Activated CD4-positive, alpha-beta memory T cell treated with anti-CD3 and anti-CD28 coated beads for 36 hours (primary cell): ENCODE measurements at regions of chr9 and their contacts with region 1.

Region 1: GRCh38 chr9:121278535-121279261 is 10.7 kb downstream of the GSN start:
- DNase-seq: peak; percentile 60
- H3K4me3 Mint-ChIP-seq: no peak overlapping the region
- H3K27ac Mint-ChIP-seq: no peak overlapping the region
- H3K4me1 Mint-ChIP-seq: peaks cover 5% of the 10 kb centered on the region
- H3K27me3 Mint-ChIP-seq: no peaks in the 10 kb centered on the region

Region 2: GRCh38 chr9:121213136-121213806 is 65.4 kb before region 1 on chr9:
- CTCF ChIA-PET with region 1: interaction called, 17 read pairs
- POLR2A ChIA-PET with region 1: no interaction called
- intact Hi-C with region 1: loop called (anchors 5 kb)
- DNase-seq: peak; percentile 84
- H3K4me3 Mint-ChIP-seq: no peak overlapping the region
- H3K27ac Mint-ChIP-seq: no peak overlapping the region
- H3K4me1 Mint-ChIP-seq: peaks cover 5% of the 10 kb centered on the region
- H3K27me3 Mint-ChIP-seq: no peaks in the 10 kb centered on the region

Region 3: DNA sequence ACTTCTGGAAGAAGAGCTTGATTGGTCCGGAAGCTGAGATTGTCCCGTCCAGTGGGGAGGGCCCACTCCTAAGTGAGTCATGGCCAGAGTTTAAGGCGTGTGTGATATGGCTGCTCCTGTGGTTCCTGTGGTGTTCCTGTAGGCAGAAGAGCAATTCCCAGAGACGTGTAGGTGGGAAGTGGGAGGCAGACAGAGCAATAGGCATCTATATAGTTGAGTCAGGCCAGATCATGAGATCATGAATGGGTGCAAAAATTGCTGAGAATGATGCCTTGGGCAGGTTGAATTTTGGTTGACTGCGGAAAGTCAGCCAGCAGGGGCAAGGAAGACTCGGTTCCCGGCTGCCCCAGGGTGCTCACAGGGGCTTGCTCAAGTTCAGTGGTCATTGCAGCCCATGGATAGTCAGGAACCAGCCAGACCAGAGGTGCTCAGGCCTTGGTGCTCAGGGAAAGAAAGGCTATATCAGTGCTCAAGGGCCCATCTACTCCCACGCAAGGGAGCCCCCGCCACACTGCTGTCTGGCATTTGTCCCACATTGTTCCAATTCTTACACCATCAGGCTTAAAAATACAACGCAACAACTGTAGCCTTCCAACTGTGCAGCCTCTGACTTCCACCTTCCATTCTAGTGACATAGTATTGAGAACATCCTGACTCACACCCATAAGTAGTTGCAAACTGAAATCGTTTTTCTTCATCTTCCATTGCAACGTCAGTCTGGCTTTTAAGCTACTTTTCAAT is 31.7 kb before region 1 on chr9:
- CTCF ChIA-PET with region 1: interaction called, 14 read pairs
- POLR2A ChIA-PET with region 1: no interaction called
- intact Hi-C with region 1: no loop called
- DNase-seq: no peak
- H3K4me3 Mint-ChIP-seq: no peak overlapping the region
- H3K27ac Mint-ChIP-seq: no peak overlapping the region
- H3K4me1 Mint-ChIP-seq: no peaks in the 10 kb centered on the region
- H3K27me3 Mint-ChIP-seq: no peaks in the 10 kb centered on the region

Region 4: GRCh38 chr9:121261107-121261460 is 17.6 kb before region 1 on chr9:
- CTCF ChIA-PET with region 1: interaction called, 16 read pairs
- POLR2A ChIA-PET with region 1: no interaction called
- intact Hi-C with region 1: no loop called
- DNase-seq: no peak
- H3K4me3 Mint-ChIP-seq: no peak overlapping the region
- H3K27ac Mint-ChIP-seq: no peak overlapping the region
- H3K4me1 Mint-ChIP-seq: no peaks in the 10 kb centered on the region
- H3K27me3 Mint-ChIP-seq: no peaks in the 10 kb centered on the region

Region 5: DNA sequence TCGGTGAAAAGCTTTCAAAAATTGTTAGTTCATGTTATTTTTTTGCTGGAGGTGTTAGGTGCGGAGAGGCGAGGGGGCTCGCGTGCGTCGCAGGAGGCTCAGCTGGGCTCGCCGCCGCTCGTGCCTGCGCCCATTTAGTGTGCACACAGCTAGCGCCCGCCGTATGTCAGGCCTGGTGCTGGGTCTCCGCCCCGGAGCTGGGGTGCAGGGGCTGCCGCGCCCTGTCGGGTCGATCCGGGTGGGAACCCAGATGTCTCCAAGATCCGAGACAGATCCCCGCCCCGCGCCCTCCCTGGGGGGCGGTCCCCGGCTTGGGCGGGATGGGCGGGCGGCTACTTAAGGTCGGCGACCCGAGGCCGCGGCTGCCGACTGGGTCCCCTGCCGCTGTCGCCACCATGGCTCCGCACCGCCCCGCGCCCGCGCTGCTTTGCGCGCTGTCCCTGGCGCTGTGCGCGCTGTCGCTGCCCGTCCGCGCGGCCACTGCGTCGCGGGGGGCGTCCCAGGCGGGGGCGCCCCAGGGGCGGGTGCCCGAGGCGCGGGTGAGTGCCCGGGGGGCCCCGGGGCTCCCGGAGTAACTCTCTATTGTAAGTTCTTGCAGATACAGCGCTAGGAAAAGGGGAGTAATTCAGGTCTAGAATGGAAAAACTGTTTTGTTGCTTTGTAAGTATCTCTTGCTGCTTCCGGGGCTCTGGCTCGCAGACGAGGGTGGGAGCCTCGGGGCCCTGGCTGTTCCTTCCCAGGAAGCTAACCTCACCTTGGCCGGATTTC is 21.0 kb after region 1 on chr9:
- CTCF ChIA-PET with region 1: interaction called, 4 read pairs
- POLR2A ChIA-PET with region 1: no interaction called
- intact Hi-C with region 1: loop called (anchors 2 kb)
- DNase-seq: peak; percentile 24
- H3K4me3 Mint-ChIP-seq: peak overlapping the region; percentile 61
- H3K27ac Mint-ChIP-seq: no peak overlapping the region
- H3K4me1 Mint-ChIP-seq: peaks cover 13% of the 10 kb centered on the region
- H3K27me3 Mint-ChIP-seq: peaks cover 18% of the 10 kb centered on the region

Region 6: DNA sequence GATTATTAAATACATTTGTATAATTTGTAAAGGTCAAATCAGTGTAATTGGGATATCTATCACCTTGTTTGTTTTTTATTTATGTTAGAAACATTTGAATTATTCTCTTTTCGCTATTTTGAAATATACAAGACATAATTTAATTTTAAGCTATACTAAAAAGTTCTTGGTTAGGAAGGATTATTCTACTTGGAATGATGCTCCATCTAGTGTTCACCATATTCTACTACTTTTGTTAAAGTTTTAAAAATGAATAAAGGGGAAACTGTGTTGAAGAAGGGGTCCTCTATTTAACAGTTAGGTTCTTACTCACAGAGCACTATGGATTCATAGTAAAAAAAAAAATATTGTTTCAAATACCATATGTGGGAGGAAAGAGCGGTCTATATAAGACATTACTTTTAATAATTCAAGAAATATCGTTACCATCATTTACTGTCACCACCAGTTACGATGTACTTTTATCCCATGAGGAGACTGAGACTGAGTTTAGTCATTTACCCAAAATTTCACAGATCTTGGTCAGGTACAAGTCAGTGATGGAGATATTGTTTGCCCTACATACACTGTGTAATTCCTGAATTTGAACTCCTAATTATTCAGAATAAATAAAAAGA is 97.6 kb after region 1 on chr9:
- CTCF ChIA-PET with region 1: no interaction called
- POLR2A ChIA-PET with region 1: no interaction called
- intact Hi-C with region 1: loop called (anchors 2 kb)
- DNase-seq: no peak
- H3K4me3 Mint-ChIP-seq: no peak overlapping the region
- H3K27ac Mint-ChIP-seq: no peak overlapping the region
- H3K4me1 Mint-ChIP-seq: peaks cover 14% of the 10 kb centered on the region
- H3K27me3 Mint-ChIP-seq: no peaks in the 10 kb centered on the region